HepG2 (cell line): ENCODE measurements at regions of chr11 and their contacts with region 1.

Region 1: GRCh38 chr11:9573052-9573774 is at the start of gene WEE1:
- DNase-seq: peak; percentile 94
- ATAC-seq: peak; percentile 88
- H3K4me3 ChIP-seq: peak within 1 kb of the TSS; percentile 78 to 90 (median 87)
- H3K27ac ChIP-seq: peak within 1 kb of the TSS; percentile 100
- H3K4me1 ChIP-seq: peaks cover 67% of the 10 kb centered on the region
- H3K27me3 ChIP-seq: no peaks in the 10 kb centered on the region; a peak in 1 of 5 replicates
- CTCF ChIP-seq: no peak
- EP300 ChIP-seq: peak in 1 of 2 experiments; percentile 16; a peak in 2 of 4 replicates
- POLR2A ChIP-seq: peak in 1 of 2 experiments; percentile 91
- RAD21 ChIP-seq: no peak; the same call in 1 of the 2 replicates
- total RNA-seq, gene WEE1: 63.7 and 71.7 TPM in 2 replicates

Region 2: GRCh38 chr11:9534791-9535781 is 38.1 kb before region 1 on chr11:
- CTCF ChIA-PET with region 1: no interaction called
- POLR2A ChIA-PET with region 1: interaction called, 25 read pairs
- in situ Hi-C with region 1: loop called (anchors 5 kb)
- intact Hi-C with region 1: loop called (anchors 2 kb)
- DNase-seq: peak; percentile 51
- ATAC-seq: peak; percentile 68
- H3K4me3 ChIP-seq: peak overlapping the region in 2 of 3 experiments; percentile 17 to 30; a peak in 3 of 6 replicates
- H3K27ac ChIP-seq: peak overlapping the region; percentile 12
- H3K4me1 ChIP-seq: peaks cover 50% of the 10 kb centered on the region
- H3K27me3 ChIP-seq: no peaks in the 10 kb centered on the region
- CTCF ChIP-seq: peak; percentile 83
- EP300 ChIP-seq: no peak
- POLR2A ChIP-seq: no peak
- RAD21 ChIP-seq: peak; percentile 81; the same call in 1 of the 2 replicates

Region 3: GRCh38 chr11:9550191-9550628 is 23.0 kb before region 1 on chr11:
- CTCF ChIA-PET with region 1: no interaction called
- POLR2A ChIA-PET with region 1: interaction called, 14 read pairs
- in situ Hi-C with region 1: no loop called
- intact Hi-C with region 1: no loop called
- DNase-seq: no peak
- ATAC-seq: no peak
- H3K4me3 ChIP-seq: no peak overlapping the region
- H3K27ac ChIP-seq: no peak overlapping the region
- H3K4me1 ChIP-seq: peaks cover 13% of the 10 kb centered on the region
- H3K27me3 ChIP-seq: no peaks in the 10 kb centered on the region
- CTCF ChIP-seq: no peak
- EP300 ChIP-seq: no peak
- POLR2A ChIP-seq: no peak
- RAD21 ChIP-seq: no peak

Region 4: GRCh38 chr11:9606809-9607510 is 33.7 kb after region 1 on chr11:
- CTCF ChIA-PET with region 1: no interaction called
- POLR2A ChIA-PET with region 1: interaction called, 35 read pairs
- in situ Hi-C with region 1: loop called (anchors 5 kb)
- intact Hi-C with region 1: loop called (anchors 2 kb)
- DNase-seq: peak; percentile 69
- ATAC-seq: peak; percentile 95
- H3K4me3 ChIP-seq: peak overlapping the region; percentile 31 to 69 (median 43); a peak in 5 of 6 replicates
- H3K27ac ChIP-seq: peak overlapping the region; percentile 13
- H3K4me1 ChIP-seq: peaks cover 56% of the 10 kb centered on the region
- H3K27me3 ChIP-seq: no peaks in the 10 kb centered on the region
- CTCF ChIP-seq: peak; percentile 72
- EP300 ChIP-seq: no peak
- POLR2A ChIP-seq: no peak
- RAD21 ChIP-seq: no peak

Region 5: DNA sequence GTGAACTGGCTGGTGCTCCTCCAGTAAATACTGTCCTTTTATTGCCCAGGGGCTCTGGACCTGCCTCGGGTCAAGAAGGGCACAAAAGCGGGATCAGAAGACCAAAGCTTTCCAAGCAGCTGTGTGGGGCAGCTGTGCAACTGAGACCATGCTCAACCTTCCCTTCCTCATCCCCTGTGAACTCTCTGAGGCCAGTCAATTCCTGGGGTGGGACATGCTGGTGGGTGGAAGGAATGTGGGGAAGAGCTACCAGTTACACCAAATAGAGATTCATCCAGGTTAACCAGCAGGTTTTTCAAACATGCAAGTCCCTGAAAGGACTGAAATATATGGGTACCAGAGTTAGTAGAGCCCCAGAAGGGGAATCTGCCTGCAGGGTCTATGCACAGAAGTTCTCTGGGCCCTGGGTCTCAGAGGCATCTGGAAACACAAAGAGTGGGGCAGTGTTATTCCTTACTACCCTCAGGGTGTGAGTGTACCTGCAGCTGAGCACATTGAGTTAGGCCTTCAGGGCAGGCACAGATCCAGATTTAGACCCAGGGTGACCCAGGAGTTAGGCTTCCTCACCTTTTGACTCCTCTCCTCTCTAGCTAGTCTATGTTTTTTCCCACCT is 46.6 kb after region 1 on chr11:
- CTCF ChIA-PET with region 1: no interaction called
- POLR2A ChIA-PET with region 1: no interaction called
- in situ Hi-C with region 1: no loop called
- intact Hi-C with region 1: no loop called
- DNase-seq: no peak
- ATAC-seq: no peak
- H3K4me3 ChIP-seq: no peak overlapping the region
- H3K27ac ChIP-seq: no peak overlapping the region
- H3K4me1 ChIP-seq: peaks cover 6% of the 10 kb centered on the region
- H3K27me3 ChIP-seq: peaks cover 0 to 1% of the 10 kb centered on the region in 2 experiments; a peak in 1 of 5 replicates
- CTCF ChIP-seq: no peak
- EP300 ChIP-seq: no peak
- POLR2A ChIP-seq: no peak
- RAD21 ChIP-seq: no peak